KBM-7 (cell line): ENCODE measurements at regions of chr17 and their contacts with region 1.

Region 1: GRCh38 chr17:68777243-68777855 is 176.2 kb upstream of the FAM20A start:
- DNase-seq: peak; percentile 88

Region 2: GRCh38 chr17:68972119-68972704 is 194.9 kb after region 1 on chr17:
- in situ Hi-C with region 1: loop called (anchors 25 kb)
- DNase-seq: peak; percentile 72

Region 3: DNA sequence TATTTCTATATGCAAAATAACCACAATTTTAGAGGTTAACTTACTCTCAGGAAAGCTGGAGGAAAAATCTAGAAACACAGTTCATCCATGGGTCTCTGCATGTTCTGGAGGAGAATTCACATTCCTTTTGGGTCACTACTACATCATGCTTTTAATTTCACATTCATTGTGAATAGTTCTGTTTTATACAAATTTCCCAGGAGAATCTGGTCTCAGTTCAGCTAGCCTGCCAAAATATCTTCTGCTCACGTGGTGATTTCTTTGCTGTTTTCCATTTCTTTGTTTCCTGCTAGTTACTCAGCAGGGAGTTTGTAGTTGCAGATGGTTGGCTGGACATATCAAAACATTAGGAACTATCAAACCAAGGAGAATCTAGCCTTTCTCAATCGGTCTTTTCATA is 283.5 kb after region 1 on chr17 and contains the start of gene ABCA9:
- in situ Hi-C with region 1: loop called (anchors 25 kb)
- DNase-seq: no peak